ENCODE measurements at regions of chr2 and their contacts with region 1.

Region 1: GRCh38 chr2:12141618-12142258 is 395.3 kb downstream of the LPIN1 start:
- DNase-seq: no peak
- ATAC-seq: no peak
- H3K4me3 ChIP-seq: no peak overlapping the region
- H3K27ac ChIP-seq: no peak overlapping the region
- H3K4me1 ChIP-seq: no peaks in the 10 kb centered on the region
- H3K27me3 ChIP-seq: no peaks in the 10 kb centered on the region
- CTCF ChIP-seq: no peak

Region 2: DNA sequence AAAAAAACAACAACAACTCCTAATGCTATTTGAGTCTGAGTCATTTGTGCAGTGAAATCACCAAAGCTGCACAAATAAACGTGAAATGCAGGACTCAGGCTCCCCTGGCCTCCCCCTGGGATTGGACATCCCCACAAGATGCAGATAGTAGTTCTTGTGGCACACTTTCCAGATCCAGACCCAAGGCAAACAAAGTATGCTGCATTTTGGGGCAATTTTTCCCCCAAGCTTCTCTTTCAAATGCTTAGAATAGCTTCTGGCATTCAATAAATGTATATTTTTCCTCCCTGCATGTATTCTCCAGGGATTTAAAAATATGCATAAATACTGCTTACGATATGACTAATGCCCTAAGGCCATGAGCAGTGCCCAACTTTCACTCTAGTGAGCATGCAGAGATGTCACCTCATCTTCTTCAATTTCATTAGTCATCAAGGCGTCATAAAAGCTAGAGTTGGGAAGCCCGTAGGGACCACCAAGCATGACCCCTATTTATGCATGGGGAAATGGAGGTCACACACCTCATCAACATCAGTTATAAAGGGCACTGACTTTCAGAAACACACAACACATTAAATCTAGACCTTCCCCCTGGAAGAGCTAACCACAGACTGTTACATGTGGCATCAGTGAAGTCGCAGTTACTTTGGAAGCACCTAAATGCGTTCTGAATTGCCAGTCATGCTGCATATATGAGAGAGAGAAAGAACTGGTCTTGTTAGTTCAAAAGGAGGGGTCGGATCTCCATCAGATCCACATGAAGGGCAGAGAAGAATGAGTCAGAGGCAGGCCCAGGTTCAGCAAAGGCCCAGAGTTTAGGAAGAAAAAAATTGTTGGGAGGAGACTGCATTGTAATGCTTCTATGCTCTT is 21.2 kb before region 1 on chr2:
- CTCF ChIA-PET with region 1: no interaction called
- POLR2A ChIA-PET with region 1: interaction called, 11 read pairs
- intact Hi-C with region 1: no loop called
- DNase-seq: peak; percentile 84
- ATAC-seq: peak; percentile 88
- H3K4me3 ChIP-seq: no peak overlapping the region
- H3K27ac ChIP-seq: peak overlapping the region; percentile 71
- H3K4me1 ChIP-seq: peaks cover 24% of the 10 kb centered on the region
- H3K27me3 ChIP-seq: no peaks in the 10 kb centered on the region
- CTCF ChIP-seq: no peak